Common myeloid progenitor, CD34-positive (primary cell): ENCODE measurements at regions of chr1 and their contacts with region 1.

Region 1: DNA sequence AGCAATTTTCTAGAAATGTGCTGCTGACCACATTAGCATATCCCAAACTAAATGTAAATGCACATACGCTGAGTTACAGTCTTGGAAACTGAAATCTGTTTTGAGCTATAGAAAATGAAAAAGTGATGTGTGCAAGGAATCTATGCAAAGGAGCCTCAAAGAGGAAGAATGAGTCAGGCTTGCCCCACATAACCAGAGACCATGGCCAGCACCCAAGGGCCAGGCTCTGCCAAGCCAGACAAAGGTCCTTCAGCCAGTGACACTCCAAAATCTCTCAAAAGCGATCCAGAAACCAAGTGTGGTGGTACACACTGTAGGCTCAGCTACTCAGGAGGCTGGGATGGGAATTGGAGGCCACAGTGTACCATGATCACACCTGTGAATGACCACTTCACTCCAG is 195.2 kb downstream of the TOMM20 start:
- DNase-seq: peak in 2 of 3 donors; percentile 68 to 76
- H3K4me3 ChIP-seq: no peak overlapping the region
- H3K27ac ChIP-seq: no peak overlapping the region
- H3K4me1 ChIP-seq: peaks cover 4 to 41% (median 24%) of the 10 kb centered on the region in 4 experiments
- H3K27me3 ChIP-seq: no peaks in the 10 kb centered on the region

Region 2: GRCh38 chr1:234755449-234755863 is 178.0 kb before region 1 on chr1:
- CTCF ChIA-PET with region 1: no interaction called
- POLR2A ChIA-PET with region 1: no interaction called
- DNase-seq: peak in 1 of 3 donors; percentile 39
- H3K4me3 ChIP-seq: no peak overlapping the region
- H3K27ac ChIP-seq: no peak overlapping the region
- H3K4me1 ChIP-seq: peaks cover 0 to 16% (median 5%) of the 10 kb centered on the region in 4 experiments
- H3K27me3 ChIP-seq: no peaks in the 10 kb centered on the region

Region 3: DNA sequence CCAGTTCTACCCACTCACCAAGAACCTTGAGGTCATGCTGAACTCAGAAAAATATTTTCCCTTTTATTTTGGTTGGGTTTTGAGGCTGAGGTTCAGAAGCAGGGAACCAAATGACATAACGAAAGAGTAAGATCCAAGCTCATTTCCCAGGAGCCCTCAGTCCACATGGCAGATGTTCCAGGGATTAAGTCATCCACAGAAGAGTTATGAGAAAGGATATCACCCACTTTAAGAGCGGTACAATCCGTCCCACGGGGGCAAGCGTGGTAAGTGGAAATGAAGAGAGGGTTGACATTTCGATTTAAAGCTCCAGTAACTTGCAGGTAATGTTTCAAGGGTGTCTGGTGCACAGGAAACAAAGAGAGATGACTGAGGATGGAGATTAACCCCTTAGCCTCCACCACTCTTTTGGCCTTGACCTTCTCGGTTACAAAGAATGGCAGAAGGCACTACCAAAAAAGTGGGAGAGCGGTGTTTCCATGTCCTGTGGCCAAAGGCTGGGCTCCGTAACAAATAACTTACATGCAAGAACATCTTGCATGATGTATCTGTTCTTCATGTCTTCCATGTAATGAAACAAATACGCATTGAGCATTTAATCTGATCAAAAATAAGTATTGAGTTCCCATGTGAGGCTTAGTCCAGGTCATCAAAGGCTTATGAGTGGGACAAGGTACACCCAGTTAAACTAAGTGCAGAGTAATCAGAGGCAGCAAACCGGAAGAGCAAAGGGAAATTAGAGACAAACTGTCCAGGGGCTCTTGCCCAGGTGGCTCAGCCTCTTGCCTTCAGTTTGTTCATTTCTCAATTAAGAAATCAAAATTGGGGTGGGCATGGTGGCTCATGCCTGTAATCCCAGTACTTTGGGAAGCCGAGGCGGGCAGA is 46.2 kb before region 1 on chr1:
- CTCF ChIA-PET with region 1: no interaction called
- POLR2A ChIA-PET with region 1: no interaction called
- DNase-seq: no peak
- H3K4me3 ChIP-seq: no peak overlapping the region
- H3K27ac ChIP-seq: no peak overlapping the region
- H3K4me1 ChIP-seq: peaks cover 0 to 89% (median 50%) of the 10 kb centered on the region in 4 experiments
- H3K27me3 ChIP-seq: no peaks in the 10 kb centered on the region

Region 4: GRCh38 chr1:234944439-234945344 is 11.2 kb after region 1 on chr1:
- CTCF ChIA-PET with region 1: interaction called, 11 read pairs
- POLR2A ChIA-PET with region 1: no interaction called
- DNase-seq: peak in 2 of 3 donors; percentile 63 to 72
- H3K4me3 ChIP-seq: peak overlapping the region in 1 of 7 experiments; percentile 16
- H3K27ac ChIP-seq: peak overlapping the region; percentile 33 to 74
- H3K4me1 ChIP-seq: peaks cover 16 to 32% (median 20%) of the 10 kb centered on the region in 4 experiments
- H3K27me3 ChIP-seq: no peaks in the 10 kb centered on the region

Region 5: GRCh38 chr1:235181561-235182245 is 248.2 kb after region 1 on chr1:
- CTCF ChIA-PET with region 1: no interaction called
- POLR2A ChIA-PET with region 1: interaction called, 10 read pairs
- DNase-seq: no peak
- H3K4me3 ChIP-seq: no peak overlapping the region
- H3K27ac ChIP-seq: no peak overlapping the region
- H3K4me1 ChIP-seq: no peaks in the 10 kb centered on the region
- H3K27me3 ChIP-seq: no peaks in the 10 kb centered on the region